Activated B cell treated with CpG ODN at 0.5 μM for 24 hours (primary cell): ENCODE measurements at regions of chr6 and their contacts with region 1.

Region 1: DNA sequence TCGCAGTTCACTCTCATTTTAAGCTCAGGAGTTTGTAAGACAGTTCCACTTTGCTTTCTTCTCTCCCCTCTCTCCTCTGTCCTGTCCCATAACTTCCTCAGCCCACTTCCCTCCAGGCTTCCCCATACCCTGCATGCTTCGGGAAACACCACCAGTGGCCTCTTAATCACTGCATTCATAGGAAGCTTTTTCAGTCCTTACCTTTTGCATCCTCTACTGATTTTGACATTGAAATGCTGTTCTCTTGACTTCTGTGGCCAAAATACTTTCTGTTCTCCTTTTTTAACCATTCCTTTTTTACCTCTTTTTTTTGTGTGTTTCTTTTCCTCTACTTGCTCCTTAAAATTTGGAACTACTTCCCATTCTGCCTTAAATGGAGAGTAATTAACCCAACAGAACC is 69.7 kb downstream of the HIVEP1 start:
- DNase-seq: no peak
- ATAC-seq: no peak
- H3K4me3 Mint-ChIP-seq: peak overlapping the region; percentile 53
- H3K27ac Mint-ChIP-seq: peak overlapping the region; percentile 43
- H3K4me1 Mint-ChIP-seq: peaks cover 45% of the 10 kb centered on the region
- H3K27me3 Mint-ChIP-seq: no peaks in the 10 kb centered on the region
- CTCF ChIP-seq: no peak

Region 2: GRCh38 chr6:12097791-12098190 is 16.0 kb after region 1 on chr6:
- CTCF ChIA-PET with region 1: no interaction called
- POLR2A ChIA-PET with region 1: no interaction called
- intact Hi-C with region 1: loop called (anchors 2 kb)
- DNase-seq: no peak
- ATAC-seq: no peak
- H3K4me3 Mint-ChIP-seq: no peak overlapping the region
- H3K27ac Mint-ChIP-seq: no peak overlapping the region
- H3K4me1 Mint-ChIP-seq: peaks cover 20% of the 10 kb centered on the region
- H3K27me3 Mint-ChIP-seq: no peaks in the 10 kb centered on the region
- CTCF ChIP-seq: no peak

Region 3: DNA sequence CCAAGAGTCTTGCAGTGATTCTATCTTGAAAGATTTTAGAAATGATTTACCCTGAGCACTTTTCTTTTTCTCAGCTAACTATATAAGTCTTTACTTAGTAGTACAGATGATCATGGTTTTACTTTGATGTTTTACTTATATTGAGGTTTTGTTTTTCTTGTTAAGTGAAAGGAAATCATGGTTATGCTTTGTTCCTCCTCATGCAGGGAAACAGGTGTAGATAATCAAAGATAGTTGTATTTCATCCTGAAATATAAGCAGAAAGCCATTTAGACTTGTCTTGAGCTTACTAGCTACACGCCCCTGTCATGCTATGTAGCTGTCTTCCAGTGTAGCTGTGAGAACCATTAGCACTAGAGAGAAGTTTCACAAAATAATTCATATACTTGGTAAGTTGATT is 44.3 kb after region 1 on chr6:
- CTCF ChIA-PET with region 1: no interaction called
- POLR2A ChIA-PET with region 1: no interaction called
- intact Hi-C with region 1: no loop called
- DNase-seq: no peak
- ATAC-seq: no peak
- H3K4me3 Mint-ChIP-seq: no peak overlapping the region
- H3K27ac Mint-ChIP-seq: no peak overlapping the region
- H3K4me1 Mint-ChIP-seq: peaks cover 4% of the 10 kb centered on the region
- H3K27me3 Mint-ChIP-seq: no peaks in the 10 kb centered on the region
- CTCF ChIP-seq: no peak

Region 4: GRCh38 chr6:12467706-12468670 is 386.2 kb after region 1 on chr6:
- CTCF ChIA-PET with region 1: no interaction called
- POLR2A ChIA-PET with region 1: no interaction called
- intact Hi-C with region 1: no loop called
- DNase-seq: no peak
- ATAC-seq: no peak
- H3K4me3 Mint-ChIP-seq: no peak overlapping the region
- H3K27ac Mint-ChIP-seq: no peak overlapping the region
- H3K4me1 Mint-ChIP-seq: no peaks in the 10 kb centered on the region
- H3K27me3 Mint-ChIP-seq: peaks cover 9% of the 10 kb centered on the region
- CTCF ChIP-seq: no peak